GM12878 (cell line): ENCODE measurements at regions of chr19 and their contacts with region 1.

Region 1: DNA sequence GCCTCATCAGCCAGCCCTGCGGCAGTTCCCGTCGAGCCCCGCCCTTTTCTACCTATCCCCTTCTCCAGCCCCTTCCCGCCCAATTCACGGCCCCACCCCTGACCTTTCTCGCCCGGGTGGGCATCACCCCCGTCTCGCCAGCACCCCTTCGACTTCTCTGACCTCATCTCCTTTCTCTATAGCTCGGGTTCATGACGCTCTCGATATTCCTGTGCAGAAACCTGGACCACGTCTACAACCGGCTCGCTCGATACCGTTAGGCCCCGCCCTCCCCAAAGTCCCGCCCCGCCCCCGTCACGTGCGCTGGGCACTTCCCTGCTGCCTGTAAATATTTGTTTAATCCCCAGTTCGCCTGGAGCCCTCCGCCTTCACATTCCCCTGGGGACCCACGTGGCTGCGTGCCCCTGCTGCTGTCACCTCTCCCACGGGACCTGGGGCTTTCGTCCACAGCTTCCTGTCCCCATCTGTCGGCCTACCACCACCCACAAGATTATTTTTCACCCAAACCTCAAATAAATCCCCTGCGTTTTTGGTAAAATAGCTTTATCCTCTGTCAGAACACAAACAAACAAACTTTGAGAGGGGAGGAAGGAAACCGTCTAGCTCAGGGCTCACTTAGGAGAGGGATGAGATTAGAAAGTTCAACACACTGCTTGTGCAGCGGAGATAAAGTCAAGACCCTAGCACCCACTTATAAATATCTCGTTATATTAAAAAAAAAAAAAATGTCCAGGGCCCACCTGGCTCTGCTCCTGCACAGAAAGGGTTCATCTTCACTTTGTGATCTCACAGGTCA is 5.1 kb downstream of the CD37 start:
- DNase-seq: peak; percentile 93
- ATAC-seq: peak; percentile 80
- H3K4me3 ChIP-seq: 0 out of 2 replicates have a peak overlapping the region, but pooled peaks have one; percentile 20
- H3K27ac ChIP-seq: no peak overlapping the region
- H3K4me1 ChIP-seq: peaks cover 27% of the 10 kb centered on the region
- H3K27me3 ChIP-seq: no peaks in the 10 kb centered on the region
- CTCF ChIP-seq: peak in 1 of 3 experiments; percentile 21; a peak in 1 of 6 replicates
- EP300 ChIP-seq: peak; percentile 92 to 96; a peak in 3 of 4 replicates
- POLR2A ChIP-seq: no peak
- RAD21 ChIP-seq: no peak

Region 2: DNA sequence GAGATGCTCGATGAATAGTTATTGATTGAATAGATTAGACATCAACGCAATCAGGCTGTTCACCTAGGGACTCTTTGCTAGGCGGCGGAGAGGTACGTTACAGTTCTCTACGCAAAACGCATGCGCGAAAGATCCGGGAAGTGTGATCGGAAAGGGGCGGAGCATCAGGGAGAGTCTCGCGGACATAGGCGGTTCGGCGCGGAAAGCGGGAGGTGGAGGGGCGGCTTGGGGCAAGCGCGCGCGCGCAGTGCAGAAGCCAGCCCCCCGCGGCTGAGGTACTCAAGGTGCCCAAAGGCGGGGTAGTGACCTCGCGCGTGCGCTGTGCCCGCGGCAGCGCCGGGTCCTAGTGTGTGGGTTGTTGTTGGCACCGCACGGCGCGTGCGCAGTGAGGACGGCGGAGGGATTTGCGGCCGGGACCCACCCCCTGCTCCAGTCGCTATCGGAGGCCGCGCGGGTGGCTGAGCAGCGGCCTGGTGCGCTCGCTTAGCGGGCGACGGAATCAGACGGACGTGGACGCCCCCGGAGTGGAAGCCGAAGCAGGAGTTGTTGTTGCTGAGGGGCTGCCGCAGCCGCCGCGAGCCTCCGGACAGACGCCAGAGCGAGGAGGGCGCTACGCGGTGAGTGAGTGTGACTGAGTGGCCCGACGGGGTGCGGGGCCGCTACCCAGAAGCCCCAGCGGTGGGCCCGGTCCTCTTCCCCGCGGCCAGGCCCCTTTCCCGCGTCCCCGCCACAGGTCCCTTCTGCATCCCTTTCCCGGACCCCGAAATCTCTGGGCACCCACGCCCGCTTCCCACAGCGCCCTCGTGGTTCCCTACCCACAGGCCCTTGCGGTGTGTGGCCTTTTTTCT is 255.0 kb before region 1 on chr19 and contains the start of gene SNRNP70:
- CTCF ChIA-PET with region 1: no interaction called
- POLR2A ChIA-PET with region 1: no interaction called
- RAD21 ChIA-PET with region 1: no interaction called
- SMC1A ChIA-PET with region 1: no interaction called
- in situ Hi-C with region 1: no loop called
- intact Hi-C with region 1: no loop called
- DNase-seq: peak; percentile 94
- ATAC-seq: peak; percentile 97
- H3K4me3 ChIP-seq: peak within 1 kb of the TSS; percentile 89
- H3K27ac ChIP-seq: peak within 1 kb of the TSS; percentile 87
- H3K4me1 ChIP-seq: peaks cover 4% of the 10 kb centered on the region; the same call in 1 of the 2 replicates
- H3K27me3 ChIP-seq: no peaks in the 10 kb centered on the region
- CTCF ChIP-seq: no peak
- EP300 ChIP-seq: no peak
- POLR2A ChIP-seq: peak; percentile 100
- RAD21 ChIP-seq: no peak
- polyA plus RNA-seq, gene SNRNP70: 2.7 to 14.9 TPM

Region 3: DNA sequence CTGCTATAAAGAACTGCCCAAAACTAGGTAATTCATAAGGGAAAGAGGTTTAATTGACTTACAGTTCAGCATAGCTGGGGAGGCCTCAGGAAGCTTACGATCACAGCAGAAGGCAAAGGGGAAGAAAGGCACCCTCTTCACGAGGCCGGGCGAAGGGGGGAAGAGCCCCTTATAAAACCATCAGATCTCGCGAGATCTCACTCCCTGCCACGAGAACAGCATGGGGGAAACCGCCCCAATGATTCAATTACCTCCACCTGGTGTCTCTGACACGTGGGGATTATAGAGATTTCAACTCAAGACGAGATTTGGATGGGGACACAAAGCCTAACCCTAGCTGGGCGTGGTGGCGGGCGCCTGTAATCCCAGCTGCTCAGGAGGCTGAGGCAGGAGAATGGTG is 58.1 kb before region 1 on chr19:
- CTCF ChIA-PET with region 1: no interaction called
- POLR2A ChIA-PET with region 1: no interaction called
- RAD21 ChIA-PET with region 1: no interaction called
- SMC1A ChIA-PET with region 1: no interaction called
- in situ Hi-C with region 1: no loop called
- intact Hi-C with region 1: no loop called
- DNase-seq: no peak
- ATAC-seq: no peak
- H3K4me3 ChIP-seq: no peak overlapping the region
- H3K27ac ChIP-seq: no peak overlapping the region
- H3K4me1 ChIP-seq: no peaks in the 10 kb centered on the region
- H3K27me3 ChIP-seq: no peaks in the 10 kb centered on the region
- CTCF ChIP-seq: no peak
- EP300 ChIP-seq: no peak
- POLR2A ChIP-seq: no peak
- RAD21 ChIP-seq: no peak

Region 4: DNA sequence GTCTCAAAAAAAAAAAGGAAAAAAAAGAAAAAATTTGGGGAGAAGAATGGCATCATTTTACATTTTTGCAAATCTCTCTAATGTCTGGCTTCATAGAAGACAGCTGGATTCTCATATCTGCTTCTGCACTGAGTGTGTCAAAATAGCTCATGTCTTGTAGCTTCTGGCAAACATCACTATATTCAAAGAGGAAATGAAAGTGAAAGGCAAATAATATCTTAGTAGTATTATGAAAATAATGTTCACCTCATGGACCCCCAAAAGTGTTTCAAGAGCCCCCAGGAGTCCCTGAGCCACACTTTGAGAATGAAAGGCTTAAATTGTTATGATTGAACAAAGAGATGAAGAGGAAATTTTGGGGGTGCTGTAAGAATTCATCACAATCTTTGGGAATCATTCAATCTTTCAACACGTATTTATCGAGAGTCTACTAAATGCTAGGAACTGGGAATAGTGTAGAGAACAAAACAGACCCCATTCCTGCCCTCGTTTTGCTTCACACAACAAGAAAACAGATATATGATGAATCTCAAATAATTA is 14.0 kb before region 1 on chr19:
- CTCF ChIA-PET with region 1: interaction called, 17 read pairs
- POLR2A ChIA-PET with region 1: interaction called, 44 read pairs
- RAD21 ChIA-PET with region 1: interaction called, 15 read pairs
- SMC1A ChIA-PET with region 1: interaction called, 13 read pairs
- in situ Hi-C with region 1: no loop called
- intact Hi-C with region 1: no loop called
- DNase-seq: no peak
- ATAC-seq: peak; percentile 60
- H3K4me3 ChIP-seq: no peak overlapping the region; the same call in 1 of the 2 replicates
- H3K27ac ChIP-seq: peak overlapping the region; percentile 87
- H3K4me1 ChIP-seq: peaks cover 49% of the 10 kb centered on the region
- H3K27me3 ChIP-seq: no peaks in the 10 kb centered on the region
- CTCF ChIP-seq: no peak
- EP300 ChIP-seq: peak in 1 of 2 experiments; percentile 54; a peak in 1 of 4 replicates
- POLR2A ChIP-seq: no peak
- RAD21 ChIP-seq: no peak

Region 5: DNA sequence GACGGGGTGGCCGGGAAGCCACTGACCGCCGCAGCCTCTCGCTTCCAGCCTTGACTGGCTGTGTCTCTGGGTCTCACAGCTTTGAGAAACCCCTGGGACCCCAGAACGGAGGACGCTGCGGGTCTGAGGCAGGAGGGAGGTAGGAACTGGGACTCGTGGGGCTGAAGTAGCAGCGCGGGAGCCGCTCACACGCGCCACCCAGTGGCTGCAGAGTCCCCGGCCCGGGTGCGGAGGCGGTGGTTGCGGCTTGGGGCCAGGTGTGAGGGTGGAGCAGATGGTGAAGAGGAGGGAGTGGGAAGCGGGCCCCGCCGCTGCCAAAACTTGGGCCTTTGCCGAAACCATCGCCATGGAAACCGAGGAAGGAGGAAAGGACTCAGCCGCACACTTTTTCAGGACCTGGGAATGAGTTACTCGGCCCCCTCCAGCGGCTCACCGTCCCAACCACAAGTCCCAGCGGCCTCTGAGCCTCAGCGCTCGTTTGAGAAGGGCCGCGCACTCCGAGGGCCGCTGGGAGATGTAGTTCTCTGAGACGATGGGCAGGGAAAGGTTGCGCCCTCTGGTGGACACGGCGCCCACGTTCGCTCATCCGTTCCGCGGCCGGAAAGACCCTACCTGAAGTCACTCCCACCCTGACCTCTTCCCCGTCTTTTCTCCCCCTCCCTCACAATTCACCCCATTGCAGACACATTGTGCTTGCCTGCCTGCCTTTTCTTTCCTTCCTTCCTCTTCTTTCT is 103.3 kb after region 1 on chr19:
- CTCF ChIA-PET with region 1: no interaction called
- POLR2A ChIA-PET with region 1: interaction called, 3 read pairs
- RAD21 ChIA-PET with region 1: no interaction called
- SMC1A ChIA-PET with region 1: interaction called, 3 read pairs
- in situ Hi-C with region 1: no loop called
- intact Hi-C with region 1: loop called (anchors 1 kb)
- DNase-seq: peak; percentile 80
- ATAC-seq: peak; percentile 92
- H3K4me3 ChIP-seq: peak overlapping the region; percentile 81
- H3K27ac ChIP-seq: peak overlapping the region; percentile 21; the same call in 1 of the 2 replicates
- H3K4me1 ChIP-seq: no peaks in the 10 kb centered on the region
- H3K27me3 ChIP-seq: peaks cover 9 to 20% of the 10 kb centered on the region in 2 experiments
- CTCF ChIP-seq: peak; percentile 70 to 92 (median 90)
- EP300 ChIP-seq: no peak
- POLR2A ChIP-seq: no peak
- RAD21 ChIP-seq: peak; percentile 78

Region 6: GRCh38 chr19:50167314-50167721 is 827.1 kb after region 1 on chr19:
- CTCF ChIA-PET with region 1: no interaction called
- POLR2A ChIA-PET with region 1: no interaction called
- RAD21 ChIA-PET with region 1: no interaction called
- SMC1A ChIA-PET with region 1: no interaction called
- in situ Hi-C with region 1: no loop called
- intact Hi-C with region 1: no loop called
- DNase-seq: no peak
- ATAC-seq: no peak
- H3K4me3 ChIP-seq: no peak overlapping the region
- H3K27ac ChIP-seq: no peak overlapping the region
- H3K4me1 ChIP-seq: no peaks in the 10 kb centered on the region
- H3K27me3 ChIP-seq: no peaks in the 10 kb centered on the region
- CTCF ChIP-seq: no peak
- EP300 ChIP-seq: no peak
- POLR2A ChIP-seq: no peak
- RAD21 ChIP-seq: no peak